Ascending aorta (tissue), 2 donors: ENCODE measurements at regions of chr6 and their contacts with region 1.

Region 1: DNA sequence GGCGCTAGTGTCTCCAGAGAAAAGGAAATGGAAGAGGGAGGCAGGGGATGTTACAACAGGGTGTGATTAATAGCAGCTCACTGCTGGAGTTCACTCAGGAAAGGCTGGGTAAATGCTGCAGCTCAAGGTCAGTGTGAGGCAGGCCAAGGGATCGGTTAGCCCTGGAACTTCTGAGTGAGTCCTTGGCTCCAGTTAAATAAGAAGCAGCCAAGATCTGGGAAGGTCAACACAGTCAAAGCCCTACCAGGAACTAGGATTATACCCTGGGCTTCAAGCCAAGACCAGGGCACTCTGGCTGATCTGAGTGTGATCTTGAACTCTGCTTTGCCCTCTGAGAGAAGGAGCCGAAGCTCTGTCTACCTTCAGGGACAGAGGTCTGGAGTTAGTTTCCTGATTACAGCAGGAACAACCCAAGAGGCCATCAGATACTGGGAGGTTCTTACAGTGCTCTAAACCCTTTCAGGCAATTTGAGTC is 44.3 kb downstream of the TPD52L1 start:
- DNase-seq: peak; percentile 37 to 89
- H3K4me3 ChIP-seq: peak overlapping the region in 1 of 2 donors; percentile 14
- H3K27ac ChIP-seq: peak overlapping the region; percentile 74 to 83
- H3K4me1 ChIP-seq: peaks cover 18 to 40% of the 10 kb centered on the region in 2 donors
- H3K27me3 ChIP-seq: no peaks in the 10 kb centered on the region
- CTCF ChIP-seq: no peak

Region 2: DNA sequence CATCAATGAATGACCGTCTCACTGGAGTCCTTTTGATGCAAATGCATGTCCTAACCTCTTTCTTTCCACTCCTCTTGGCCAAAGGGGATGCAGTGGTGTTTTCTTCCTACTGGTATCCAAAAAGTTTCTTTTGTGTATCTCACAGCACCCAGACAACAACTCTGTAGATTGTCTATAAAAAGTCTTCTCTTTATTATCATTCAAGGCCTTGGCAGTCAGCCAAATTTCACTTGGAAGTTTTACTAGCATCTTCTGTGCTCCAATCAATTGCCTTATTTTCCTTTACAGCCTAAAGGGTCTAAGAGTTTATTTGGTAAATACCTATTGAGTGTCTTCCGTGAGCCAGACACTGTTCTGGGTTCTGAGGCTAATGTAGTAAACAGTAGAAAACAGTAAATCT is 385.8 kb before region 1 on chr6:
- intact Hi-C with region 1: no loop called
- DNase-seq: no peak
- H3K4me3 ChIP-seq: no peak overlapping the region
- H3K27ac ChIP-seq: no peak overlapping the region
- H3K4me1 ChIP-seq: no peaks in the 10 kb centered on the region
- H3K27me3 ChIP-seq: no peaks in the 10 kb centered on the region
- CTCF ChIP-seq: no peak

Region 3: GRCh38 chr6:125213939-125214338 is 16.1 kb after region 1 on chr6:
- intact Hi-C with region 1: loop called (anchors 2 kb)
- DNase-seq: no peak
- H3K4me3 ChIP-seq: no peak overlapping the region
- H3K27ac ChIP-seq: no peak overlapping the region
- H3K4me1 ChIP-seq: no peaks in the 10 kb centered on the region
- H3K27me3 ChIP-seq: no peaks in the 10 kb centered on the region
- CTCF ChIP-seq: no peak

Region 4: GRCh38 chr6:125759184-125759902 is 561.5 kb after region 1 on chr6:
- intact Hi-C with region 1: loop called (anchors 5 kb)
- DNase-seq: peak in 1 of 2 donors; percentile 75
- H3K4me3 ChIP-seq: peak overlapping the region; percentile 4 to 50
- H3K27ac ChIP-seq: peak overlapping the region; percentile 95 to 96
- H3K4me1 ChIP-seq: peaks cover 13 to 68% of the 10 kb centered on the region in 2 donors
- H3K27me3 ChIP-seq: no peaks in the 10 kb centered on the region
- CTCF ChIP-seq: peak; percentile 10 to 40 (median 32)